Ascending aorta (tissue), 2 donors: ENCODE measurements at regions of chr19 and their contacts with region 1.

Region 1: GRCh38 chr19:49877020-49877878 is at the starts of genes AKT1S1 and TBC1D17:
- DNase-seq: peak; percentile 98 to 100
- H3K4me3 ChIP-seq: peak within 1 kb of the TSS; percentile 85 to 100
- H3K27ac ChIP-seq: peak within 1 kb of the TSS; percentile 99
- H3K4me1 ChIP-seq: peaks cover 11 to 23% of the 10 kb centered on the region in 2 donors
- H3K27me3 ChIP-seq: no peaks in the 10 kb centered on the region
- CTCF ChIP-seq: no peak
- total RNA-seq, gene AKT1S1: 12.8 TPM
- total RNA-seq, gene TBC1D17: 44.6 TPM

Region 2: DNA sequence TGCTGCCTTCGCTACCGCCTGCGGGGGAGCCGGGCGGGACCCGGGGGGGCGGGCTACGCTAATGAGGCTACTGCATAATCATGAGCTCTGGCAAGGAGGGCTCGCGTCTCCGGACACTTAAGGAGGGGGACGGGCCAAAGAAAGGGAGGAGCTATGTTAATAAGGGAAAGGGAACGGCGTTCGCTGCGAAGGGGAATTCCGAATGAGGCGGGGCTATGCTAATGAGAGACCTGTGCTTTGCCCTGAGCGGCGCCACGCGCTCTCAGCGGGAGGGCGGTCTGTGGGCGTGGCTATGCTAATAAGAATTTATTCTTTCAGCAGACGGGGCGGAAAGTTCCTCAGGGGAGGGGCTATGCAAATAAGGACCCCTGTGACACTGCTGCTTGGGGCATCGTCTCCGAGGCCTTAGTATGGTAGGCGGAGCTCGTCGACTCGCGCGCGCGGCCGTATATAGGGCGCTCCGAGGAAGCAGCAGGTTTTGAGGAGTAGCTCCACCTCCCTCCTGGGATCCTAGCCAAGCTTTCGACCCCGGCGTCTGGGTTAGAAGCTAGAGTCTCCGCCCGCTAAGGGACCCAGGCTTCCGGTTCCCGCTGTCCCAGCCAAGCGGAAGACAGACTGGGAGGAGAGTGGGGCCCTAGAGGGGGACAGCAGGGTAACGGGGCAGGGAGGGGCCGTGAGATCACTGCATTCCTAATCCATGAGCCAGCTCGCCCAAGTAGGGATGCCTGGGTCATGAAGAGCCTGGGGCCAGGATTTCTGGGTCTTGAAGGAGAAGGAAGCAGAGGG is 236.9 kb before region 1 on chr19 and contains the start of gene RRAS:
- intact Hi-C with region 1: loop called (anchors 2 kb)
- DNase-seq: peak; percentile 99 to 100
- H3K4me3 ChIP-seq: peak within 1 kb of the TSS; percentile 80 to 87
- H3K27ac ChIP-seq: peak within 1 kb of the TSS; percentile 99 to 100
- H3K4me1 ChIP-seq: peaks cover 20 to 24% of the 10 kb centered on the region in 2 donors
- H3K27me3 ChIP-seq: no peaks in the 10 kb centered on the region
- CTCF ChIP-seq: no peak
- total RNA-seq, gene RRAS: 161 TPM

Region 3: DNA sequence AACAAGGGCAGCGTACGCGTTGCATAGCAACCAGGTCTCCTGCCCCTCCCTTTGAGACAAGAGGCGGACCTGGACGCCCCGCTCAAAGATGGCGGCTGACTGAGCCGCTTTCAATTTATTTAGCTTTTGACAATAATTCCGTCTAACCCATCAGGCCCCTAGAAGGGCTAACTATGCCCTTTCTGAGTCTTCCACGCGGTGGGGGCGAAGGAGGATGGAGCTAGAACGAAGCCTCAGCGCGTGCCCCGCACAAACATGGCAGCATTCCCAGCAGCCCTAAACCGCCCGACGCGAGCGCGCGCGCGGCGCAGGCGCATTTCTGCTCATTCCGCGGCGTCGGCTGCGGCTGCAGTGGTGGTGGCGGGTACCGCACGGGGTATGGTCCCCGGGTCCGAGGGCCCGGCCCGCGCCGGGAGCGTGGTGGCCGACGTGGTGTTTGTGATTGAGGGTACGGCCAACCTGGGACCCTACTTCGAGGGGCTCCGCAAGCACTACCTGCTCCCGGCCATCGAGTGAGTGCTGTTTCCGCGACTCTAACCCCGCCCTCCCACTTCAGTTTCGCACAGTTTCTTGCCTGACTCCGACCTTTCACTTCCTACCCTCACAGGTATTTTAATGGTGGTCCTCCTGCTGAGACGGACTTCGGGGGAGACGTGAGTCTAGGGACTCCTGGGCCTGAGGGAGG is 59.1 kb before region 1 on chr19 and contains the start of gene MED25:
- intact Hi-C with region 1: loop called (anchors 1 kb)
- DNase-seq: peak; percentile 30 to 92
- H3K4me3 ChIP-seq: peak within 1 kb of the TSS; percentile 78 to 85
- H3K27ac ChIP-seq: peak within 1 kb of the TSS; percentile 93 to 97
- H3K4me1 ChIP-seq: peaks cover 0 to 24% of the 10 kb centered on the region in 2 donors
- H3K27me3 ChIP-seq: no peaks in the 10 kb centered on the region
- CTCF ChIP-seq: peak; percentile 29 to 89 (median 33)
- total RNA-seq, gene MED25: 54.0 TPM

Region 4: DNA sequence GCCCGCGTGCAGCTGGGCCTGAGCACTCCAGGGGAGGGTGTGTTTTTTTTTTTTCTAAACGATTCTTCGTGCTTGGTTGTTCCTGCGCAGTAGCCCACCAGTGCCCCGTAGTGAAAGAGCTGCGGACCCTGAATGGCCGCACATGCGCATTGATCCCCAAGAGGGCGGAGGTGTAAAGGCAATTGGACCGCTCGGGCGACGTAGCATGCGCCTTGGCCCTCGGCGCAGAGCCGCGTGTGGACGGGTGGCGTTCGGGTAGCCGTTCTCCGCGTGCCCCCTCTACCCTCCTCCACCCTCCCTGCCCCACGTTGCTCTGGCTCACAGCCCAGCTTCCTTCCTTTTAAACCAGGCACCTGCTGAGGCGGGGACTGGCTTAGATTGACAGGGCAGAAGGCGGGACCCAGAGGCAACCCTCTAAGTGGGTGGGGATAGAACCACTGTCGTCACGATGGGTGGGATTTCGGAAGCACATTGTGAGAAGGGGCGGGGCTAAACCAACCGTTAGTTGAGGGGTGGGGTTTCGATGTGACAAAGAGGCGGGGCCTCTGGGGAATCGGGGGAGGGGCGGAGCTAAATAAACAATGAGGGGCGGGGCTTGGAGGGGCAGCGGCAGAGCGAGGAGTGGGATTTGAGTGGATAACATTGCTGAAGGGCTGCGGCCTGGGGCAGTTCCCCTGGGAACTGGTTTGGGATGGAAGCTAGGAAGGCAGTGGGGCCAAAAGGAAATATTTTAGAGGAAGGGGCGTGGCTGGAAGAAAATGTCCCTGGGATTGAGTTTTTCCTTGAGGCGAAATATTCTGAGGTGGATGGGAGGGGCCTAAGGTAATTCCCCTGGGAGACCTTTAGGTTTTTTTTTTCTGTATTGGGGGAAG is 52.6 kb after region 1 on chr19:
- intact Hi-C with region 1: loop called (anchors 2 kb)
- DNase-seq: peak; percentile 82 to 95
- H3K4me3 ChIP-seq: peak overlapping the region; percentile 71 to 88
- H3K27ac ChIP-seq: peak overlapping the region; percentile 73 to 91
- H3K4me1 ChIP-seq: peaks cover 3 to 13% of the 10 kb centered on the region in 2 donors
- H3K27me3 ChIP-seq: no peaks in the 10 kb centered on the region
- CTCF ChIP-seq: no peak

Region 5: DNA sequence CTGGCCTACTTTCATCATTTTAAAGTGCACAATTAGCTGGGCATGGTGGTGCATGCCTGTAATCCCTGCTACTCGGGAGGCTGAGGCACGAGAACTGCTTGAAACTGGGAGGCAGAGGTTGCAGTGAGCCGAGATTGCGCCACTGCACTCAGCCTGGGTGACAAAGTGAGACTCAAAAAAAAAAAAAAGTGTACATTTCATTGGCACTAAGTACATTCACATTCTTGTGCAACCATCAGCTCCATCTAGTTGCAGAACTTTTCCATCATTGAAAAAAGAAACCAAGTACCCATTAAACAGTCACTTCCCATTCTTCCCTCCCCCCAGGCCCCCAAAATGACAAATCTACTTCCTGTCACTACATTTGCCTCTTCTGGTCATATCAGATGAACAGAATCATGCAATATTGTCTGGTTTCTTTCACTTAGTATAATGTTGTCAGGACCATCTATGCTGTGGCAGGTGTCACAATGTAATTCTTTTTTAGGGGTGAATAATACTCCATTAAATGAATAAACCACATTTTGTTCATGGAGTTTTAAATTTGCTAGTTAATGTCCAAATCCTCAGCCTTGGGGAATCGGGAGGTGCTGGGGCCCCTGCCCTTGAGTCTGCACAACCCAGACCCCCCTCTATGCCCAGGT is 91.2 kb after region 1 on chr19:
- intact Hi-C with region 1: no loop called
- DNase-seq: no peak
- H3K4me3 ChIP-seq: no peak overlapping the region
- H3K27ac ChIP-seq: no peak overlapping the region
- H3K4me1 ChIP-seq: no peaks in the 10 kb centered on the region
- H3K27me3 ChIP-seq: no peaks in the 10 kb centered on the region
- CTCF ChIP-seq: no peak

Region 6: DNA sequence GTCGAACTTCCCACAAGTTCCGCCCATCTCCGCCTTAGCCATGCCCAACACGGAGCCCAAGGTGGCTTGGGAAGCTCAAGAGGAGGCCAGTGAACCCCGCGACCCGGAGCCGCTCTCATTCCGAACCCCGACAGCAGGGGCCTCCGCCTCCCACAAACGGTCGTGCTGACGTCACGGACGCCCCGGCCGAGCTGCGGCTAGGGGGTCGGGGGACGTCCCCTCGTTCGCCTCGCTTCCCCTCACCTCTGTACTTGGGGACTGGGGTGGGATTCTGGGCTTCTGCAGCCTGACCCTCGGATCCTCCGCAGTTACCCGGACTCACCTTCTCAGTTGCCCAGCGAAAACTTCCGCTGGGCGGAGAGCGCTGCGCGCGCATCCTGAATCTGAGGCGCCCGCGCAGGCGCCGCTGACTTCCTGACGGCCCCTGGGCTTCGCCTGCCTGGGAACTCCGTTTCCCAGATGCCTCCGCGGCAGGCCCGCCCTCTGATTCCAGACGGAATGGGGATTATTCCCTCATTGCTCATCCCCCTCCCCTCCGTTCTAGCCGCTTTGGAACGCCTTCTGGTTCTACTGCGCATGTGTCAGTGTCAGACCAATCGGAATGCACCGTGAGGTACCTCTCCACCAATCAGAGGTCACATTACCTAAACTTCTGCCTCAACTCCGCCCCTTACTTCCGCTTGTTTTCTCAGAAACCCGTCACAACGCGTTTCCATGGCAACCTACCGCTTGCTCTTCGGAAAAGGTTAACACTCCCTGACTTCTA is 148.0 kb after region 1 on chr19 and contains the start of gene VRK3:
- intact Hi-C with region 1: loop called (anchors 1 kb)
- DNase-seq: peak; percentile 99 to 100
- H3K4me3 ChIP-seq: peak within 1 kb of the TSS; percentile 84 to 95
- H3K27ac ChIP-seq: peak within 1 kb of the TSS; percentile 87 to 94
- H3K4me1 ChIP-seq: peaks cover 15 to 22% of the 10 kb centered on the region in 2 donors
- H3K27me3 ChIP-seq: no peaks in the 10 kb centered on the region
- CTCF ChIP-seq: peak in 1 of 3 experiments; percentile 23
- total RNA-seq, gene VRK3: 27.6 TPM

Region 7: GRCh38 chr19:50376166-50377050 is 499.2 kb after region 1 on chr19 and contains the start of gene NR1H2:
- intact Hi-C with region 1: loop called (anchors 2 kb)
- DNase-seq: peak; percentile 77 to 97
- H3K4me3 ChIP-seq: peak within 1 kb of the TSS; percentile 88 to 90
- H3K27ac ChIP-seq: peak within 1 kb of the TSS; percentile 99 to 100
- H3K4me1 ChIP-seq: peaks cover 0 to 6% of the 10 kb centered on the region in 2 donors
- H3K27me3 ChIP-seq: no peaks in the 10 kb centered on the region
- CTCF ChIP-seq: no peak
- total RNA-seq, gene NR1H2: 150 TPM